CD8-positive, alpha-beta memory T cell (primary cell): ENCODE measurements at regions of chr19 and their contacts with region 1.

Region 1: DNA sequence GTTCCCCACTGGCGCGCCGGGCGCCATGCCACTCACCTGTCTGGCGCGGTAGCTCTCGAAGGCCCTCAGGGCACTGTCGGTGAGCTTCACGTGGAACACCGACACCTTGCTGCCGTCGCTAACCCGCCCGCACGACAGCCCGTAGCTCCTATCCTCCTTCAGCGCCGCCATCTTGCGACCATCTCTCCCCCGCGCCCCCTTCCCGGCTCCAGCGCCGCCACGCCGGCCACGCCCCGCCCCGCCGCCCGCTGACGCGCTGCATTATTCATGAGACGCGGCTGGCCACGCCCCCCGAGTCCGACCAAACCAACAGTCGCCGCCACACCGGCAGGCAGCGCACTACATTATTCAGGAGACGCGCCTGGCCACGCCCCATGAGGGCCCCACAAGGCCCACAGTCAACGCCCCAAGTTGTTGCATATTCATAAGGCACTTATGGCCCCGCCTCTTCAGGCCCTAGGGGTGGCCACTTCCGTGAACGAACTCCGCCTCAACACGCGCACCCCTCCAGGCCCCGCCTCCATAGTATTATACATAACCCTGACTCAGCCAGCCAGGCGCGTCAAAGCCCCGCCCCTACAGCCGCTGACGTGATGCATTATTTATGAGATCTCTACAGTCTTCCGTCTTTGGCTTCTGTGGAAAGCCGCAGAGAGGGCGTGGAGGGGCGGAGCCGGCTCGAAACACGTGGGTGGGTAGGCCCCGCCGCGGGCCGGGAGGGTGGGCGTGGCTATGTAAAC is at the start of gene ELL:
- DNase-seq: peak; percentile 100
- H3K4me3 ChIP-seq: peak within 1 kb of the TSS; percentile 76
- H3K4me3 Mint-ChIP-seq: peak within 1 kb of the TSS; percentile 87 to 98 (median 94)
- H3K27ac ChIP-seq: peak within 1 kb of the TSS; percentile 92
- H3K27ac Mint-ChIP-seq: peak within 1 kb of the TSS; percentile 79 to 100 (median 98)
- H3K4me1 ChIP-seq: peaks cover 14% of the 10 kb centered on the region
- H3K4me1 Mint-ChIP-seq: peaks cover 21 to 29% (median 25%) of the 10 kb centered on the region in 3 donors
- H3K27me3 ChIP-seq: no peaks in the 10 kb centered on the region
- H3K27me3 Mint-ChIP-seq: peaks cover 0 to 2% of the 10 kb centered on the region in 2 donors
- total RNA-seq, gene ELL: 24.4 to 25.5 TPM

Region 2: DNA sequence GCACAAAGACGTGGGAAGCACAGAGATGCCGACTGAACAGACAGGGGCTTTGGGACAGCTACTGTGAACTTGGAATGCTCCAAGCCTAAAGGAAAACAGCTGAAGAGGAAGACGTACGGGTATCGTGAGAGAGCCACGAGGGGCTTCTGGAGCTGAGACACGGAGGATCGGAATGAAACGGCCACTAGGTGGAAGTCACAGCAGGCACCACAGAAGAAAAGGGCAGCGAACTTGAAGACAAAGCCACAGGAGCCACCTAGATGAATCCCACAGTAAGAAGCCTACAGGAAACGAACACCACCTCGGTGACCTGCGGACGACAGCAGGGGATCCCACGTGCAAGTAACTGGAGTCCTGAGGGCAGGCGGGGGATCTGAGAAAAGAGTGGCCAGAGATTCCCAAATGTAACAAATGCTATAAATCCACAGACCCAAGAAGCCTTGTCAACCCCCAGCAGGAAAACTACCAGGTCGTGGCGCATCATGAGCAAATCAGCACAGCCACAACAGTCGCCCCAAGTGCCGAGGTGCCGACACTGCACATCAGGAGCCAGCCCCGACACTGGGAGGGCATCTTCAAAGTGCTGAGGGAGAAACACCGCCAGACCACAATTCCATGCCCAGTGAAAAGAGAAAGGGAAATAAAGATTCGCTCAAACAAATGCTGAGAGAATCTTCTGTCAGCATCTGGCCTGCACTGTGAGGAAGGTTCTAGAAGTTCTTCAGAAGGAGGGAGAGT is 44.8 kb before region 1 on chr19:
- CTCF ChIA-PET with region 1: interaction called, 28 read pairs
- POLR2A ChIA-PET with region 1: interaction called, 3 read pairs
- DNase-seq: peak in 1 of 5 donors; percentile 50
- H3K4me3 ChIP-seq: no peak overlapping the region
- H3K4me3 Mint-ChIP-seq: peak overlapping the region; percentile 32 to 80 (median 73)
- H3K27ac ChIP-seq: peak overlapping the region; percentile 6
- H3K27ac Mint-ChIP-seq: peak overlapping the region; percentile 93 to 100 (median 96)
- H3K4me1 ChIP-seq: peaks cover 76% of the 10 kb centered on the region
- H3K4me1 Mint-ChIP-seq: peaks cover 80 to 93% (median 87%) of the 10 kb centered on the region in 3 donors
- H3K27me3 ChIP-seq: no peaks in the 10 kb centered on the region
- H3K27me3 Mint-ChIP-seq: no peaks in the 10 kb centered on the region

Region 3: GRCh38 chr19:18496167-18496979 is 25.7 kb before region 1 on chr19:
- CTCF ChIA-PET with region 1: interaction called, 71 read pairs
- POLR2A ChIA-PET with region 1: interaction called, 38 read pairs
- DNase-seq: peak; percentile 36 to 90 (median 79)
- H3K4me3 ChIP-seq: peak overlapping the region; percentile 57
- H3K4me3 Mint-ChIP-seq: peak overlapping the region; percentile 81 to 93 (median 85)
- H3K27ac ChIP-seq: peak overlapping the region; percentile 87
- H3K27ac Mint-ChIP-seq: peak overlapping the region; percentile 68 to 100 (median 99)
- H3K4me1 ChIP-seq: peaks cover 96% of the 10 kb centered on the region
- H3K4me1 Mint-ChIP-seq: peaks cover 80 to 96% (median 89%) of the 10 kb centered on the region in 3 donors
- H3K27me3 ChIP-seq: no peaks in the 10 kb centered on the region
- H3K27me3 Mint-ChIP-seq: peaks cover 0 to 1% of the 10 kb centered on the region in 2 donors

Region 4: GRCh38 chr19:18542936-18543815 is 21.1 kb after region 1 on chr19 and contains the start of gene FKBP8:
- CTCF ChIA-PET with region 1: interaction called, 10 read pairs
- POLR2A ChIA-PET with region 1: interaction called, 4 read pairs
- DNase-seq: peak; percentile 87 to 95 (median 90)
- H3K4me3 ChIP-seq: peak within 1 kb of the TSS; percentile 55
- H3K4me3 Mint-ChIP-seq: peak within 1 kb of the TSS; percentile 88 to 97 (median 93)
- H3K27ac ChIP-seq: peak within 1 kb of the TSS; percentile 73
- H3K27ac Mint-ChIP-seq: peak within 1 kb of the TSS; percentile 89 to 99 (median 97)
- H3K4me1 ChIP-seq: peaks cover 17% of the 10 kb centered on the region
- H3K4me1 Mint-ChIP-seq: peaks cover 17 to 30% (median 19%) of the 10 kb centered on the region in 3 donors
- H3K27me3 ChIP-seq: no peaks in the 10 kb centered on the region
- H3K27me3 Mint-ChIP-seq: no peaks in the 10 kb centered on the region
- total RNA-seq, gene FKBP8: 161 to 170 TPM

Region 5: DNA sequence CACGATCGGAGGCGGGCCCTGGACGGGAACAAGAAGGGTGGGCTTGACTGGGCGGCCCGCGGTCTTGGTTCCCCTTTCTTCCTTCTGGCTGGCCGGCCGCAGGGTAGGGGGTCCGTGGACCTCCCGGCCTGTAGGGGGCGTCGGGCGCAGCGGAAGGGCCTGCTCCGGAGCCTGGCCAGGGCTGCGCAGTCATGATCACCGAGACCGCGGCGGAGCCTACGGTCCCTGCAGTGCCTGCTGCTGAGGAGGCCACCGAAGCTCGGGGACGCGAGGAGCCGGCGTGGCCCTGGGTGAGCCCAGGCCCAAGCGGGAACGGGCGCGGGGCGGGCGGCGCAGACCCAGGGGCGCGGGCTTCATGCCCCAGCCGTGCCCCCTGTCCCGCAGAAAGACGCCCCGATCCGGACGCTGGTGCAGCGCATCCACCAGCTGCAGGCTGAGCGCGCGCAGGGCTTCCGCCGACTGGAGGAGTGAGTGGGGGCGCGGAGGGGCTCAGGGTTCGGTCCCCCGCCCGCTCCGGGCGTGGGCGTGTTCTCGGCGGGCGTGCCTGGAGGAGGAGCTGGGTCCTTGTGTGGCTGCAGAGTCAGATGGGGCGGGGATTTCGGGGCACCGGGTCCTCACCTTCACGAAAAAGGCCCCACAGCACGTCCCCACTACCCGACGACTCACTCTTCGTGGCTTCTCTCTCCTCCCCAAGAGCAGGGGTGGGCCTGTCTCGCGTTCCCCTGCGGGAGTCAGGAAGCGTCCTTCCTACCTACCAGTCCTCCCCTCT is 66.7 kb after region 1 on chr19 and contains the start of gene REX1BD:
- CTCF ChIA-PET with region 1: interaction called, 41 read pairs
- POLR2A ChIA-PET with region 1: interaction called, 8 read pairs
- DNase-seq: peak; percentile 80 to 93 (median 84)
- H3K4me3 ChIP-seq: peak within 1 kb of the TSS; percentile 83
- H3K4me3 Mint-ChIP-seq: peak within 1 kb of the TSS; percentile 88 to 97 (median 91)
- H3K27ac ChIP-seq: peak within 1 kb of the TSS; percentile 87
- H3K27ac Mint-ChIP-seq: peak within 1 kb of the TSS; percentile 90 to 96 (median 93)
- H3K4me1 ChIP-seq: peaks cover 30% of the 10 kb centered on the region
- H3K4me1 Mint-ChIP-seq: peaks cover 29 to 45% (median 37%) of the 10 kb centered on the region in 3 donors
- H3K27me3 ChIP-seq: no peaks in the 10 kb centered on the region
- H3K27me3 Mint-ChIP-seq: peaks cover 0 to 3% of the 10 kb centered on the region in 2 donors
- total RNA-seq, gene REX1BD: 107 to 110 TPM